Activated CD8-positive, alpha-beta T cell treated with anti-CD3 and anti-CD28 coated beads for 36 hours (primary cell): ENCODE measurements at regions of chr2 and their contacts with region 1.

Region 1: GRCh38 chr2:177164584-177165052 is 48.0 kb upstream of the HNRNPA3 start:
- DNase-seq: peak; percentile 85
- ATAC-seq: peak; percentile 40
- H3K4me3 Mint-ChIP-seq: no peak overlapping the region
- H3K27ac Mint-ChIP-seq: no peak overlapping the region
- H3K4me1 Mint-ChIP-seq: peaks cover 22% of the 10 kb centered on the region
- H3K27me3 Mint-ChIP-seq: no peaks in the 10 kb centered on the region
- CTCF ChIP-seq: peak; percentile 100

Region 2: DNA sequence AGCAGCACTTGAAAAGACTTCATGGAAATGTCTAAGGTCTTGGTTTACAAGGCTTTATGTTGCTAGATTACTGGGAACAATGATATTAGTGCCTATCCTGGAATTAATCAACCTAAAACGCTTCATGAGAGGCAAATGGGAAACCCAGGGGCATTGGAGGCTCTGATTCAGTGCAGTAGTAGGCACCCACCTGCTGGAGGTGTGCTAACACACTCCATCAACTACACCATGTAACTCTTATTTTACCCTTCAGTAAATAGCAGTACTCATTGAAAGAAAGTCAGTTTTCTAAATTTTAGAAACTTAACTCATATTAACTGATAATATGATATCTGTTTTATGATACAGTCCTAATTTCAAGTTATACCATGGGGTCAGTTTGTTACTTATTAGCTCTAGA is 30.6 kb after region 1 on chr2:
- CTCF ChIA-PET with region 1: interaction called, 48 read pairs
- POLR2A ChIA-PET with region 1: interaction called, 4 read pairs
- intact Hi-C with region 1: no loop called
- DNase-seq: peak; percentile 15
- ATAC-seq: peak; percentile 51
- H3K4me3 Mint-ChIP-seq: no peak overlapping the region
- H3K27ac Mint-ChIP-seq: no peak overlapping the region
- H3K4me1 Mint-ChIP-seq: peaks cover 3% of the 10 kb centered on the region
- H3K27me3 Mint-ChIP-seq: no peaks in the 10 kb centered on the region
- CTCF ChIP-seq: no peak

Region 3: GRCh38 chr2:177229448-177230242 is 65.0 kb after region 1 on chr2:
- CTCF ChIA-PET with region 1: interaction called, 20 read pairs
- POLR2A ChIA-PET with region 1: interaction called, 3 read pairs
- intact Hi-C with region 1: no loop called
- DNase-seq: no peak
- ATAC-seq: peak; percentile 40
- H3K4me3 Mint-ChIP-seq: no peak overlapping the region
- H3K27ac Mint-ChIP-seq: peak overlapping the region; percentile 36
- H3K4me1 Mint-ChIP-seq: peaks cover 39% of the 10 kb centered on the region
- H3K27me3 Mint-ChIP-seq: no peaks in the 10 kb centered on the region
- CTCF ChIP-seq: no peak

Region 4: GRCh38 chr2:177281400-177282180 is 117.0 kb after region 1 on chr2:
- CTCF ChIA-PET with region 1: interaction called, 13 read pairs
- POLR2A ChIA-PET with region 1: interaction called, 3 read pairs
- intact Hi-C with region 1: no loop called
- DNase-seq: no peak
- ATAC-seq: no peak
- H3K4me3 Mint-ChIP-seq: no peak overlapping the region
- H3K27ac Mint-ChIP-seq: no peak overlapping the region
- H3K4me1 Mint-ChIP-seq: peaks cover 5% of the 10 kb centered on the region
- H3K27me3 Mint-ChIP-seq: no peaks in the 10 kb centered on the region
- CTCF ChIP-seq: no peak

Region 5: DNA sequence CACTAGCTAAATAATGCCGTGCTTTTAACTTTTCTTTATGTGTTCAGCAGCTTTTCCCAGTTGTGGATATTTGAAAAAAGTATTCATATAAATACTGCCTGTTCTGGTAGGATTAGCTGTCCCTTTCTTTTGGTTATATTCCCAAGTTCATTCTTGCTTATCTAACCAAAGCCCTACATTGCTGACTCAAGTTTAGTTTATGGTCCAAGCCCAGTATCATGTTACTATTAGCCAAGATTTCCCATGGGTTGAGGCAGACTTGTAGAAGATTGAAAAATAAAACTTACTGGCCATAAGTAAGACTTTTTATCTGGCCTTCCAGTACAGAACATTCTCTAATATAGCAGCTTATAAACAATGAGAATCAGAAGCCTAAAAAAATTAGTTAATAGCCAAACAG is 149.6 kb after region 1 on chr2:
- CTCF ChIA-PET with region 1: interaction called, 24 read pairs
- POLR2A ChIA-PET with region 1: interaction called, 3 read pairs
- intact Hi-C with region 1: no loop called
- DNase-seq: no peak
- ATAC-seq: no peak
- H3K4me3 Mint-ChIP-seq: no peak overlapping the region
- H3K27ac Mint-ChIP-seq: no peak overlapping the region
- H3K4me1 Mint-ChIP-seq: peaks cover 17% of the 10 kb centered on the region
- H3K27me3 Mint-ChIP-seq: no peaks in the 10 kb centered on the region
- CTCF ChIP-seq: no peak

Region 6: GRCh38 chr2:177419274-177419673 is 254.7 kb after region 1 on chr2:
- CTCF ChIA-PET with region 1: interaction called, 37 read pairs
- POLR2A ChIA-PET with region 1: no interaction called
- intact Hi-C with region 1: loop called (anchors 2 kb)
- DNase-seq: no peak
- ATAC-seq: no peak
- H3K4me3 Mint-ChIP-seq: no peak overlapping the region
- H3K27ac Mint-ChIP-seq: peak overlapping the region; percentile 68
- H3K4me1 Mint-ChIP-seq: peaks cover 35% of the 10 kb centered on the region
- H3K27me3 Mint-ChIP-seq: no peaks in the 10 kb centered on the region
- CTCF ChIP-seq: no peak